Common myeloid progenitor, CD34-positive (primary cell): ENCODE measurements at regions of chr6 and their contacts with region 1.

Region 1: GRCh38 chr6:158060455-158061360 is 79.0 kb downstream of the SYNJ2 start:
- DNase-seq: peak; percentile 60 to 84 (median 77)
- H3K4me3 ChIP-seq: no peak overlapping the region
- H3K27ac ChIP-seq: peak overlapping the region in 1 of 2 experiments; percentile 39
- H3K4me1 ChIP-seq: peaks cover 0 to 14% (median 12%) of the 10 kb centered on the region in 4 experiments
- H3K27me3 ChIP-seq: no peaks in the 10 kb centered on the region

Region 2: DNA sequence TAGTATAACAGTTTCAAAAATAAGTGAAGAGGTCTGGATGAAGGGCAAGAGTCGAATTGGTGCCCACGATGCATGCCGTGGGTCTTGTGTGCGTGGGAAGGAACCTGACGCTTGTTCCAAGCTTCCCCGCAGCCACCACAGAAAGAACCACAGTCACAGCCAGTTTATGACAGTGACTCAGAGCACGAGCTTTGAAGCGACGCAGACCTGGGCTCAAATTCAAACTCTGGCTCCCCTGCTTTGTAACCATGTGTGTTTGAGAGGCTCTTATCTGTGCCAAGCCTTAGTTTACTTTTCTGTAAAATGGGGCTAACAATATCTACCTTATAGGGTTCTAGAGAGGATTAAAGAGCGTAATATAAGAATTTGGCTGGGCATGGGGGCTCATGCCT is 13.6 kb before region 1 on chr6:
- CTCF ChIA-PET with region 1: interaction called, 10 read pairs
- POLR2A ChIA-PET with region 1: no interaction called
- DNase-seq: peak in 2 of 3 donors; percentile 62 to 77
- H3K4me3 ChIP-seq: no peak overlapping the region
- H3K27ac ChIP-seq: no peak overlapping the region
- H3K4me1 ChIP-seq: peaks cover 0 to 12% (median 0%) of the 10 kb centered on the region in 4 experiments
- H3K27me3 ChIP-seq: no peaks in the 10 kb centered on the region

Region 3: GRCh38 chr6:158086504-158087223 is 26.0 kb after region 1 on chr6:
- CTCF ChIA-PET with region 1: no interaction called
- POLR2A ChIA-PET with region 1: no interaction called
- DNase-seq: peak; percentile 19 to 89 (median 85)
- H3K4me3 ChIP-seq: no peak overlapping the region
- H3K27ac ChIP-seq: no peak overlapping the region
- H3K4me1 ChIP-seq: peaks cover 0 to 22% (median 11%) of the 10 kb centered on the region in 4 experiments
- H3K27me3 ChIP-seq: no peaks in the 10 kb centered on the region

Region 4: GRCh38 chr6:158185729-158186456 is 125.2 kb after region 1 on chr6:
- CTCF ChIA-PET with region 1: no interaction called
- POLR2A ChIA-PET with region 1: no interaction called
- DNase-seq: no peak
- H3K4me3 ChIP-seq: no peak overlapping the region
- H3K27ac ChIP-seq: no peak overlapping the region
- H3K4me1 ChIP-seq: no peaks in the 10 kb centered on the region
- H3K27me3 ChIP-seq: no peaks in the 10 kb centered on the region